Activated T-helper 2 cell treated with anti-CD3 and anti-CD28 coated beads, Interferon-gamma antibody, Interleukin-2, Interleukin-4, amounts not matched to agents 10 μg/mL and 5 μg/mL and 100 μg/mL, durations not matched to agents 14 hours and 24 hours and 36 hours (primary cell): ENCODE measurements at regions of chr1 and their contacts with region 1.

Region 1: DNA sequence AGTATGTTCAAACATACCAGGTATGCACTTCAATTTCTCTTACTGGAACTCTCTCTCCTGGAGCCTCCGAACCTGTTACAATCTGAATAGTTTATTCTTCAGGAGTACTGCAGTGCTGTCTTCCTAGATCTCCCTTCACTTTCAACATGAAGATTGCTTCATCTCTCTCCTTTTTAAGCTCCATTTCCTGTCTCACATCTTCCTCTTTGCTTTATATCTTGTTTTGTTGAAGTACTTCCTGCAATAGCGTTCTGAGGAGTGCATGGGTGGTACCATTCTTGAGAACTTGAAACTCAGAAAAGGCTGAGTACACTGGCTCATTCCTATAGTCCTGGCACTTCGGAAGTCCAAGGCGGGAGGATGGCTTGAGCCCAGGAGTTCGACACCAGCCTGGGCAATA is 15.7 kb upstream of the C1orf146 start:
- DNase-seq: no peak
- H3K4me3 Mint-ChIP-seq: no peak overlapping the region
- H3K27ac Mint-ChIP-seq: peak overlapping the region; percentile 80
- H3K4me1 Mint-ChIP-seq: peaks cover 34% of the 10 kb centered on the region
- H3K27me3 Mint-ChIP-seq: no peaks in the 10 kb centered on the region

Region 2: DNA sequence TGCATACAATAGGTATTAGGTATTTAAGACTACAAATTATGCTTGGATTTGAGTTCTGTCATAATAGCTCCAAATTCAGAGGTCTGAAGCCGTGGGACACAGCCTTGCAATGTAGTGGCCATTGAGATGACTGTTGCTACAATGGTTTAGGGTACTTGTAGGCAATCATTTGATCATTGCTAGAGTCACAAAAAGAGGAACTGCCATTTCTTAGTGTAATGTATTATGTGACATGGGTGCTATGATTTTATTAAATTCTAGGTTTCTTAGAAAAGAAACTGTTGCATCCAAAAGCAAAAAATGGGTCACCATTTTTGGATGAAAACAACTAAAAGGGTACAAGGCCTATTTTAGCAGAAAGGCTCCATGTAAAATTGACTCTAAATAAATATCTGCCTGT is 1050.3 kb before region 1 on chr1:
- intact Hi-C with region 1: no loop called
- DNase-seq: no peak
- H3K4me3 Mint-ChIP-seq: no peak overlapping the region
- H3K27ac Mint-ChIP-seq: no peak overlapping the region
- H3K4me1 Mint-ChIP-seq: no peaks in the 10 kb centered on the region
- H3K27me3 Mint-ChIP-seq: peaks cover 22% of the 10 kb centered on the region

Region 3: GRCh38 chr1:92123868-92124267 is 78.1 kb before region 1 on chr1:
- intact Hi-C with region 1: loop called (anchors 5 kb)
- DNase-seq: no peak
- H3K4me3 Mint-ChIP-seq: peak overlapping the region; percentile 26
- H3K27ac Mint-ChIP-seq: peak overlapping the region; percentile 38
- H3K4me1 Mint-ChIP-seq: peaks cover 15% of the 10 kb centered on the region
- H3K27me3 Mint-ChIP-seq: no peaks in the 10 kb centered on the region

Region 4: DNA sequence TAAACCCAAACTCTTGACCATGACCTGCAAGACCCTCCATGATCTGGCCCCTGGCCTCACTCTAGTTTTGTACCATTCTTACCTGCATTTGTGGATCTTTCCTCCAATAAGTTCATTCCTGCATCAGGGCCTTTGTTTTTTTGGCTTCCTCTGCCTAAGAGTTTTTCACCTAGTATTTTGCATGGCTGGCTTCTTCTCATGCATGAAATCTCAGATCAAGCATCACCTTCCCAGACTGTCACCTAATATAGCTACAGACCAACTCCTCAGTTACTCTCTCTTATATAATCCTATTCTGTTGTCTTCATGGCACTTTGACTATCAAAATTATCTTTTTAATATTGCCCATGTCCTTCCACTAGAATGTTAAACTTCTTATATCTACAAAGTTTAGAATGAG is 67.6 kb before region 1 on chr1:
- intact Hi-C with region 1: no loop called
- DNase-seq: no peak
- H3K4me3 Mint-ChIP-seq: no peak overlapping the region
- H3K27ac Mint-ChIP-seq: no peak overlapping the region
- H3K4me1 Mint-ChIP-seq: no peaks in the 10 kb centered on the region
- H3K27me3 Mint-ChIP-seq: no peaks in the 10 kb centered on the region

Region 5: DNA sequence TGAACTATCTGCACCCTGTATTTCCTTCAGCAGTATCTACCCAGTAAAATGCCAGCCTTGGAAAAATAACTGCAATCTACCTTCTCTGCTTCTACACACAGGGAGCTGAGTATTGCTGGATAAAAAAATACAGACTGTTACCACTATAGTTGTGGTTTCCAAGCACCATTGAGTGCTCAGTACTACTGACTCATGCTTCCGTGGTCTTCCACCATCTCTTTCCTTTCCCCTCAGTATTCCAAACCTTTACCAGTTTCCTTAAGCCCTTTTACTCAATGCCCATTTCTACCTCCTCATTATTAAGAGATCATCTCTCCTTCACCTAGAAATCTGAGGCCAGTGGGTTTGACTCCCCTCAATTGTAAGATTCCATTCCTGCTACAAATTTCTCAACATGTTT is 73.0 kb after region 1 on chr1:
- intact Hi-C with region 1: loop called (anchors 5 kb)
- DNase-seq: no peak
- H3K4me3 Mint-ChIP-seq: no peak overlapping the region
- H3K27ac Mint-ChIP-seq: no peak overlapping the region
- H3K4me1 Mint-ChIP-seq: peaks cover 10% of the 10 kb centered on the region
- H3K27me3 Mint-ChIP-seq: no peaks in the 10 kb centered on the region